ENCODE measurements at regions of chr1 and their contacts with region 1.

Region 1: DNA sequence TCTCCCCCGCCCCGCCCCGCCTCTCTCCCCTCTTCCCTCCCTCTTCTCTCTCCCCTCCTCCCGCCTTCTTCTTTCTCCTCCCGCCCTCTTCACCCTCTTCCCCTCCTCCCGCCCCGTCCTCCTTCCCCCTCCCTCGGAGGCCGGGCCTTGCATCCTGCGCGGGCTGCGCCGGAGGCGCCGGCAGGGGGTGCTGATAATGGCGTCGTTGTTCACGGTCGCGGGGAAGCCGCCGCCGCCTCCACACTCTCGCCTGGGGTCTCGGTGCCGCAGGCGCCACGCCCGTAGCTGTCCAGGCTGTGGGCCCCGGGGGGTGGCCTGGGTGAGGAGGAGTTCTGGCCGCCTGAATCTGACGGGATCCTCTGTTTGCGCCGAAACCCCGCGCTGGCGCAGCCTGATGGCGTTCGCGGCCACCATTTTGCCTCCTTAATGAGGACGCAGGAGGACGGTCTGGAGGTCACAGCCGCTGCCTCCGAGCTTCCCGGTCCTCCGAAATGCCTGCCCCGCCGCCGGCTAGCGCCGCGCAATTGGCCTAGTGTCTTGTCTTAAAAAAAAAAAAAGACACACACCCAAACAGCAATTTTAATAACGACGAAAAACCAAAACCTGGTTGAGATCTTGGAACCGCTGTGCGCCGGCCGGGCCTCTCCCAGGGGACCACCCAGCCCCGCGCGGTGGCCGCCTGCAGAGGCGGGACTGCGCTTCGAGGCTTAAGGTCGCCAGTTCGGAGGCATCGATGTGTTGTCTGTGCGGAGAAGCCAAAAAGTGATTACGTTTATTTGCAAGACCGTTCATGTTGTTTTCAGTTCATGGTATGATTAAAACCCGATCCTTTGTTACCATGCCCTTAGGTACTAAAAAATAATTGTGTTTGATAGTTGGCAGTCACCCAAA is 106.6 kb upstream of the HNRNPU start:
- DNase-seq: peak; percentile 87 to 95 (median 93)
- H3K4me3 ChIP-seq: peak overlapping the region; percentile 56 to 89 (median 79)
- H3K27ac ChIP-seq: peak overlapping the region; percentile 96 to 100 (median 100)
- H3K27me3 ChIP-seq: no peaks in the 10 kb centered on the region
- CTCF ChIP-seq: peak in 55 of 56 donors; percentile 27 to 77 (median 56)

Region 2: DNA sequence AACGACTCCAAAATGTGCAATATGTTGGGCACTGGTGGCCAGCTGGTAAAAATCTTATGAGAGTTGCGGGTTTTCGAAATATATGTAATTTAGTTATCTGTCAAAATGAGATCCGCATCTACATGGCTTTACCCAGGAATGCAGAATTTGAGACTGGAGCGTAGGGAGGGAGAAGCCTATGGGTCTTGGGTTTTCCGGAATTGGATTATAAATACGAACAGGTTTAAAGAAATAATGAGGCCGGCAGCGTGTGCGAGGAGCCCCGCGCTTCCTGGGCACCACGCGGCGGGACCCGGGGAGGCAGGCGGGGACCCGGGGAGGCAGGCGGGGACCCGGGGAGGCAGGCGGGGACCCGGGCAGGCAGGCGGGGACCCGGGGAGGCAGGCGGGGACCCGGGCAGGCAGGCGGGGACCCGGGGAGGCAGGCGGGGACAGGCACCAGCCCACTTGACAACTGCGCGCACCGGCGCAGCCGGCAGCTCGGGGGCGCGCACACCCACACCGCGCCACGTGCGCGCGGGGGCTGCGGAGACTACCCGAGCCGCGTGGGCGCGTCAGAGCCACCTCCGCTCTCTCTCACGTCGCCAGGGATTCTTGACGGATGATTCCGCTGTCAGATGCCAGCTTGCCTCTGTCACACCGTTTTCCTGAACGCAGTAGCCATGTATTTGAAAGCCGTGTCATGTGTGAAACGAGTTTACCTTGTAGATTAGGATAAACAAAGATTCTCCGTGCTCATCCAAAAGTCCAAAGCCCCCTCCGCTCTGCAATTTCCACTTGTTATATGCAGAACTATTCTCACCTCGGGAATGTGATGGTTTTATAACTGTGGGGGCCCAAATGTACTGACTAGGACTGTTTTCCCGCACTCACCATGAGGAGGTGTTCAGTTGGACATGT is 52.2 kb before region 1 on chr1:
- intact Hi-C with region 1: loop called (anchors 5 kb)
- DNase-seq: peak in 9 of 10 donors; percentile 29 to 73 (median 48)
- H3K4me3 ChIP-seq: peak overlapping the region; percentile 38 to 77 (median 67)
- H3K27ac ChIP-seq: peak overlapping the region in 57 of 59 donors; percentile 17 to 87 (median 71)
- H3K27me3 ChIP-seq: no peaks in the 10 kb centered on the region
- CTCF ChIP-seq: peak in 22 of 56 donors; percentile 4 to 51 (median 28)

Measured in dorsolateral prefrontal cortex (tissue), 120 donors.